Caco-2 (cell line): ENCODE measurements at regions of chr21 and their contacts with region 1.

Region 1: GRCh38 chr21:25039461-25040380 is 567.6 kb downstream of the MRPL39 start:
- DNase-seq: peak in 1 of 2 experiments; percentile 1
- H3K4me3 ChIP-seq: no peak overlapping the region
- H3K4me3 Mint-ChIP-seq: peak overlapping the region; percentile 60
- H3K27ac Mint-ChIP-seq: no peak overlapping the region
- H3K4me1 ChIP-seq: no peaks in the 10 kb centered on the region
- H3K4me1 Mint-ChIP-seq: no peaks in the 10 kb centered on the region
- H3K27me3 ChIP-seq: no peaks in the 10 kb centered on the region
- H3K27me3 Mint-ChIP-seq: no peaks in the 10 kb centered on the region
- CTCF ChIP-seq: no peak

Region 2: DNA sequence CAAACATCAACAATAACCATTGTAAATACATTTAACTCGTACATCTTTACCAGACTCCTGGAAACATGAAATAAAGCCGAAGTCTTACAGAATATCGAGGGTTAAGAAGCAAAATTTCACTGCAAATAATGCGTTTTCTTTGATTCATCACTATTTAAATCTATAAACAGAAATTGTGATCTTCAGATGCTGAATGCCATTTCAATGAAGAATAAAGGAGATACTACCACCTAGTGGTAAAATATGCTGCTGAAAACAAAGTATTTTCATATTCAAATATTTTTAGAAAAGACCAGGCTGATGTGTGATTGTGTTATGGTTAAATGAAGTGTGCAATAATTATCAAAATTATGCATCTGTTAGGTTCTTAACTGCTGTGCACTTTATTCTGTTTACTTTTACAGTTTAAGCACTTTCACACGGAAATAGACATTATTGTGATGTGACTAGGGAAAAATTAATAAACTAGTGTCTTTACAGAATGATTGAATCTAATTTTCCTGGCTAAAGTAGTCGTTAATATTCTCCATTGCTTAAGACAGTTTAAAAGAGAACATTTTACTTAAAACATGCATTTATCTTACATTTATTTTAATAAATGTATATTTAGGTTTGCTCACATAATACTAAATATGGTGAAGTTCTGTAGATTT is 525.5 kb before region 1 on chr21:
- CTCF ChIA-PET with region 1: no interaction called
- POLR2A ChIA-PET with region 1: no interaction called
- intact Hi-C with region 1: loop called (anchors 5 kb)
- DNase-seq: no peak
- H3K4me3 ChIP-seq: no peak overlapping the region
- H3K4me3 Mint-ChIP-seq: no peak overlapping the region
- H3K27ac Mint-ChIP-seq: no peak overlapping the region
- H3K4me1 ChIP-seq: no peaks in the 10 kb centered on the region
- H3K4me1 Mint-ChIP-seq: no peaks in the 10 kb centered on the region
- H3K27me3 ChIP-seq: no peaks in the 10 kb centered on the region
- H3K27me3 Mint-ChIP-seq: no peaks in the 10 kb centered on the region
- CTCF ChIP-seq: peak; percentile 26 to 34

Region 3: GRCh38 chr21:24785033-24785432 is 254.7 kb before region 1 on chr21:
- CTCF ChIA-PET with region 1: no interaction called
- POLR2A ChIA-PET with region 1: no interaction called
- intact Hi-C with region 1: no loop called
- DNase-seq: no peak
- H3K4me3 ChIP-seq: no peak overlapping the region
- H3K4me3 Mint-ChIP-seq: no peak overlapping the region
- H3K27ac Mint-ChIP-seq: no peak overlapping the region
- H3K4me1 ChIP-seq: no peaks in the 10 kb centered on the region
- H3K4me1 Mint-ChIP-seq: no peaks in the 10 kb centered on the region
- H3K27me3 ChIP-seq: no peaks in the 10 kb centered on the region
- H3K27me3 Mint-ChIP-seq: no peaks in the 10 kb centered on the region
- CTCF ChIP-seq: no peak

Region 4: DNA sequence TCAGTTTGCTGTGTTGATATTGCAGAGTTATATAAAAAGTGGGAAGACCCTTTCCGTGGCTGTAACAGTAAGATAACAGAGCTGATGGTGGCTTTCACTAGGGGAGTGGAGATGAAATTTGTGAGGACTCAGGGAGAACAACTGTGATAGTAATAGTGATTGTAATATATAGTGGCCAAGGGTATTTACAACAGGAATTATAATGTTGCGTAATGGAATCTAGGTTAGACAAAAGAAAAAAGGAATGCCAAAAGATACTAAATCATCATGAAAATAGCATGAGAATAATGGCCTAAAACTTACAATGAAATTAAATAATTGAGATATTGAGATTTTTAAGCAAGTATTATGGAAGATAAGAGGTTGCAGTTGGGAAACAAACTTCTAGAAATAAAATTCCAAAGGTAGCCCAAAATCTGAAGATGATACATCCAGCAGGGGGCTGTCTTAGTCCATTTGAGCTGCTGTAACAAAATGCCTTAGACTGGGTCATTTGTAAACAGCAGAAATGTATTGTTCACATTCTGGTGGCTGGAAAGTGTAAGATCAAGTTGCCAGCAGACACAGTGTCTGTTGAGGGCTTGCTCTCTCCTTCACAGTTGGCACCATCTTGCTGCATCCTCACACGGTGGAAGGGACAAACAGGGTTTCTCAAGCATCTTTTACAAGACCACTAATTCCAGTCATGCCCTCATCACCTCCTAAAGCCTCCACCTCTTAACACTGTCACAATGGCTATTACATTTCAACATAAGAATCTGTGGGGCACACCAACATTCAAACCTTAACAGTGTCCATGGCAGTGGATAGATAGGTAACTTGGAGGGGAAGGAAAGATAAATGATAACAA is 143.6 kb before region 1 on chr21:
- CTCF ChIA-PET with region 1: no interaction called
- POLR2A ChIA-PET with region 1: no interaction called
- intact Hi-C with region 1: loop called (anchors 1 kb)
- DNase-seq: peak in 1 of 2 experiments; percentile 13
- H3K4me3 ChIP-seq: no peak overlapping the region
- H3K4me3 Mint-ChIP-seq: no peak overlapping the region
- H3K27ac Mint-ChIP-seq: no peak overlapping the region
- H3K4me1 ChIP-seq: no peaks in the 10 kb centered on the region
- H3K4me1 Mint-ChIP-seq: no peaks in the 10 kb centered on the region
- H3K27me3 ChIP-seq: no peaks in the 10 kb centered on the region
- H3K27me3 Mint-ChIP-seq: no peaks in the 10 kb centered on the region
- CTCF ChIP-seq: peak in 1 of 2 experiments; percentile 53

Region 5: GRCh38 chr21:25561668-25562641 is 522.2 kb after region 1 on chr21:
- CTCF ChIA-PET with region 1: no interaction called
- POLR2A ChIA-PET with region 1: no interaction called
- intact Hi-C with region 1: no loop called
- DNase-seq: peak; percentile 42 to 51
- H3K4me3 ChIP-seq: peak overlapping the region; percentile 55
- H3K4me3 Mint-ChIP-seq: peak overlapping the region; percentile 65
- H3K27ac Mint-ChIP-seq: no peak overlapping the region
- H3K4me1 ChIP-seq: 0 out of 2 replicates have a peak, but pooled peaks cover 4% of the 10 kb centered on the region
- H3K4me1 Mint-ChIP-seq: peaks cover 5% of the 10 kb centered on the region
- H3K27me3 ChIP-seq: no peaks in the 10 kb centered on the region
- H3K27me3 Mint-ChIP-seq: no peaks in the 10 kb centered on the region
- CTCF ChIP-seq: no peak